Right ventricle myocardium inferior (tissue), 1 donor: ENCODE measurements at regions of chr4 and their contacts with region 1.

Region 1: GRCh38 chr4:3106339-3107186 is 32.1 kb downstream of the HTT start:
- DNase-seq: peak; percentile 93
- ATAC-seq: peak; percentile 98

Region 2: GRCh38 chr4:3031357-3032082 is 75.0 kb before region 1 on chr4:
- intact Hi-C with region 1: no loop called
- DNase-seq: no peak
- ATAC-seq: peak; percentile 31

Region 3: DNA sequence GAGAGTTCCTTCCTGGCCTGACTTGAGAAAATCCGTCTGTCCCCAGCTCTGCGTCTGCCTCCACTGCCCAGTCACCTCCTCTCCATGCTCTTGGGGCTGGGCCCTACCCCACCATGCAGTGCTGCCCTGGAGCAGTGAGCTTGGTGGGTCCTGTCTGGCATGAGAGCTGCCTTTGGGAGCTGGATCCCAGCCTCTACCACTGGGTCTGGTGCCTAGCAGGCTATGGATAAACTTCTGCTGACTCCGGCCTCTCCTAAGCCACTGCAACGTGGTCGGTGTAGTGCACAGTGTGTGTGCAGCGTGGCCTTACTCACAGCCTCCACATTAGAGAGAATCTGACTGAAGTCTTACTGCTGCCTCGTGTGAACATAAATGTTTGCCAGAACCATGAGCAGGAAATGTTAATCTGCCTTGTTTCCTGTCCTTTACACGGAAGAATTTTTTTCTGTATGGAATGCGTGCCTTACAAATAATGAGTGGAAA is 15.6 kb after region 1 on chr4:
- intact Hi-C with region 1: loop called (anchors 2 kb)
- DNase-seq: no peak
- ATAC-seq: peak; percentile 65

Region 4: DNA sequence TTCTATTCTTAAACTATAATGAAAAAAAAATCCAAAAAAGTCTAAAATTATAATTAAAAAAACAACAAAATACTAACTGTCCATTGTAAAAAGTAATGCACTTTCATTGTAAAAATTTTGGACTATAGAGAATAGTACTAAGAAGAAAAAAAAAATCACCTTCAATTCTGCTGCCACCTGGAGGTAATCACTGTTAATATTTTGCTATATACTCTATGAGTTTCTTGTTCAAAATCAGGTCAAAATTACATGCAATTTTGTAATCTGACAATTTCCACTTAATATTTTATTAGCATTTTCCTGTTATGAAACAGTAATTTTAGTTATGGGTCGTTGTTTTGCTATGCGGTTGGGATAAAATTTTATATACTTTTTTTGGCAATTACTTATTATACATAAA is 29.9 kb after region 1 on chr4:
- intact Hi-C with region 1: loop called (anchors 2 kb)
- DNase-seq: no peak
- ATAC-seq: no peak